HepG2 (cell line): ENCODE measurements at regions of chr1 and their contacts with region 1.

Region 1: GRCh38 chr1:243459059-243459458 is 203.2 kb downstream of the SDCCAG8 start:
- DNase-seq: no peak
- ATAC-seq: no peak
- H3K4me3 ChIP-seq: no peak overlapping the region
- H3K27ac ChIP-seq: no peak overlapping the region
- H3K4me1 ChIP-seq: peaks cover 23% of the 10 kb centered on the region
- H3K27me3 ChIP-seq: no peaks in the 10 kb centered on the region; a peak in 1 of 5 replicates
- CTCF ChIP-seq: no peak
- EP300 ChIP-seq: no peak
- POLR2A ChIP-seq: no peak
- RAD21 ChIP-seq: no peak

Region 2: GRCh38 chr1:243268751-243269460 is 190.2 kb before region 1 on chr1:
- CTCF ChIA-PET with region 1: no interaction called
- POLR2A ChIA-PET with region 1: no interaction called
- in situ Hi-C with region 1: no loop called
- intact Hi-C with region 1: no loop called
- DNase-seq: no peak
- ATAC-seq: no peak
- H3K4me3 ChIP-seq: no peak overlapping the region
- H3K27ac ChIP-seq: no peak overlapping the region
- H3K4me1 ChIP-seq: no peaks in the 10 kb centered on the region; the same call in 1 of the 2 replicates
- H3K27me3 ChIP-seq: no peaks in the 10 kb centered on the region
- CTCF ChIP-seq: no peak
- EP300 ChIP-seq: no peak
- POLR2A ChIP-seq: no peak
- RAD21 ChIP-seq: no peak

Region 3: DNA sequence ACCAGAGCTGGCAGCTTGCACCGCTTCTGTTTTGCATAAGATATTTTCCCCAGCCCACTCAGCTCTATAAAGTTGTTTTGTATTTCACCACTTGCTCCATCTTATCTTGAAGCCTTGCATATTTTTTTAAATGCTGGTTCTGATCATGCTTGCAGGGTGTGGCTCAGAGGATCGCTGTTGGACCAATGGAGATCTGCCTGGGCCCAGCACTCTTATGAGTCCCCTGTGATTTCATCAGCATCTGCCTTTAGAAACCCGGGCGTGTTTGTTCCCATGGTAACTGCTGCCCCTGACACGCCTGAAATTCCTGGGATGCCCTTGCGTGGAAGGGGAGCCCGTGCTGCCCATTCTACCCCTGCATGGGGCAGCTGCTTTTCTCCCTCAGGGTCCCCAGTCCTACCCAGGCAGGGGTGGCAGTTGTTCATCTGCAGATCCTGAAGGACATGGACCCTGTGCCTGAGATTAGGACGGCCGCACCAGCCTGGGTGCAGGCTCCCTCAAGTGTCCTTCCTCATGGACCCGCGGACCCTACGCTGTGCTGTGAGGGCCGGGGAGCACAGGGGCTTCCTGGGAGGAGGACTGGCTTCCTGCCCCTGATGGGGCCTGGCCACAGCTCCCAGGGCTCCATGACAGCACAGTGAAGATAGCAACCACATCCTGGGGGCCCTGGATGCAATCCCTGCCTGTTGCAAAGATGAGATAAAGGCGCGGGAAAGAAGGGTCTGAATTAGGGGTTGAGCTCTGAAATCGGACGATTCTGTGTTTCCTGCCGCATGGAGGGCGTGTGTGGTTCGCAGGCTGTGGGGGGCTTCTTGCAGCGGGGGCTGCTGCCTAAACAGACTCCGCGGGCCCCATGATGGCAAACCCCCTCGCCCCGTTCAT is 23.3 kb after region 1 on chr1:
- CTCF ChIA-PET with region 1: no interaction called
- POLR2A ChIA-PET with region 1: no interaction called
- in situ Hi-C with region 1: no loop called
- intact Hi-C with region 1: loop called (anchors 1 kb)
- DNase-seq: no peak
- ATAC-seq: no peak
- H3K4me3 ChIP-seq: no peak overlapping the region
- H3K27ac ChIP-seq: no peak overlapping the region
- H3K4me1 ChIP-seq: no peaks in the 10 kb centered on the region
- H3K27me3 ChIP-seq: no peaks in the 10 kb centered on the region
- CTCF ChIP-seq: no peak
- EP300 ChIP-seq: no peak
- POLR2A ChIP-seq: no peak
- RAD21 ChIP-seq: no peak

Region 4: DNA sequence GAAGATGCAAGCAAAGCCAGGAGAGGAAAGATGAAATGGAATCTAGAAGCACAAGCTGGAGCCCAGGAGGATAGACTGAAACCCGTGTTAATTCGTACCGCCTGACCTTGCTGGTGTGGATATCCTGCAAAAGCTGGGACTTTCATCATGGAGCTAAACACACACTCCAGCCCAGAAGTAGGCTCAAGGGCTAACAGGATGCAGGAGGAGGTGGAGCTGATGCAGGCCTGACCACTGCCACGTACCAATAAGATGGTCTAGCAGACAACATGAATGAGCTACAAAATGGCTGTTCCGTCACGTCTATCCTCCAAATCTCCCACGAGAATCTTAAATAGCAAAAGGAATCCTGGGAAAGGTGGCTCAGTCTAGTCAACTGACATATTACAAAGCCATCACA is 67.1 kb after region 1 on chr1:
- CTCF ChIA-PET with region 1: no interaction called
- POLR2A ChIA-PET with region 1: no interaction called
- in situ Hi-C with region 1: no loop called
- intact Hi-C with region 1: no loop called
- DNase-seq: no peak
- ATAC-seq: no peak
- H3K4me3 ChIP-seq: no peak overlapping the region
- H3K27ac ChIP-seq: no peak overlapping the region
- H3K4me1 ChIP-seq: peaks cover 2% of the 10 kb centered on the region; the same call in 1 of the 2 replicates
- H3K27me3 ChIP-seq: no peaks in the 10 kb centered on the region
- CTCF ChIP-seq: no peak
- EP300 ChIP-seq: no peak
- POLR2A ChIP-seq: no peak
- RAD21 ChIP-seq: no peak